Activated CD8-positive, alpha-beta T cell treated with anti-CD3 and anti-CD28 coated beads for 36 hours (primary cell): ENCODE measurements at regions of chr5 and their contacts with region 1.

Region 1: GRCh38 chr5:79020861-79021561 is 35.9 kb upstream of the ARSB start:
- DNase-seq: peak; percentile 66
- ATAC-seq: peak; percentile 51
- H3K4me3 Mint-ChIP-seq: no peak overlapping the region
- H3K27ac Mint-ChIP-seq: no peak overlapping the region
- H3K4me1 Mint-ChIP-seq: peaks cover 5% of the 10 kb centered on the region
- H3K27me3 Mint-ChIP-seq: peaks cover 41% of the 10 kb centered on the region
- CTCF ChIP-seq: peak; percentile 68

Region 2: DNA sequence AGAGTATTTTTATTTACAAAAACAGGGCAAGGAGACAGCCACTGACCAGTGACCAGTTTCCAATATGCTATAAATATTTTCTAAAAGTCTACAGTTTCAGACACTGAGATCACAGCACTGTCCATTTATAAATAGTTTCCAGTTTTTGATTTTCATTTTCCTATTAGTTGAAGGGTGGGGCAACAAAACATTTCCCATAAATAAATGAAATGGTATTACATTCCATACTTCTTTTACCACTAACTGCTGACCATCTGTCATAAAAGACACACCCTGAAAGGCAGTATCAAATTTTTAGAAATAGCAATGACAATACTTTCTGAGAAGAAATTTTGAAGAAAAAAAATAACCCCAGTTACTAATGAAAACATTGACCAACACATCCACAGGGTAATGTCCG is 162.6 kb before region 1 on chr5:
- CTCF ChIA-PET with region 1: no interaction called
- POLR2A ChIA-PET with region 1: no interaction called
- intact Hi-C with region 1: no loop called
- DNase-seq: no peak
- ATAC-seq: no peak
- H3K4me3 Mint-ChIP-seq: no peak overlapping the region
- H3K27ac Mint-ChIP-seq: no peak overlapping the region
- H3K4me1 Mint-ChIP-seq: no peaks in the 10 kb centered on the region
- H3K27me3 Mint-ChIP-seq: no peaks in the 10 kb centered on the region
- CTCF ChIP-seq: no peak

Region 3: GRCh38 chr5:78899922-78900362 is 121.1 kb before region 1 on chr5:
- CTCF ChIA-PET with region 1: interaction called, 11 read pairs
- POLR2A ChIA-PET with region 1: no interaction called
- intact Hi-C with region 1: no loop called
- DNase-seq: peak; percentile 43
- ATAC-seq: no peak
- H3K4me3 Mint-ChIP-seq: no peak overlapping the region
- H3K27ac Mint-ChIP-seq: no peak overlapping the region
- H3K4me1 Mint-ChIP-seq: no peaks in the 10 kb centered on the region
- H3K27me3 Mint-ChIP-seq: no peaks in the 10 kb centered on the region
- CTCF ChIP-seq: peak; percentile 33

Region 4: GRCh38 chr5:78993165-78993564 is 27.8 kb before region 1 on chr5:
- CTCF ChIA-PET with region 1: interaction called, 57 read pairs
- POLR2A ChIA-PET with region 1: interaction called, 3 read pairs
- intact Hi-C with region 1: no loop called
- DNase-seq: no peak
- ATAC-seq: peak; percentile 85
- H3K4me3 Mint-ChIP-seq: no peak overlapping the region
- H3K27ac Mint-ChIP-seq: no peak overlapping the region
- H3K4me1 Mint-ChIP-seq: peaks cover 18% of the 10 kb centered on the region
- H3K27me3 Mint-ChIP-seq: peaks cover 3% of the 10 kb centered on the region
- CTCF ChIP-seq: no peak

Region 5: GRCh38 chr5:79042188-79042587 is 21.2 kb after region 1 on chr5:
- CTCF ChIA-PET with region 1: interaction called, 53 read pairs
- POLR2A ChIA-PET with region 1: no interaction called
- intact Hi-C with region 1: no loop called
- DNase-seq: no peak
- ATAC-seq: no peak
- H3K4me3 Mint-ChIP-seq: no peak overlapping the region
- H3K27ac Mint-ChIP-seq: no peak overlapping the region
- H3K4me1 Mint-ChIP-seq: no peaks in the 10 kb centered on the region
- H3K27me3 Mint-ChIP-seq: no peaks in the 10 kb centered on the region
- CTCF ChIP-seq: no peak

Region 6: GRCh38 chr5:79074641-79075040 is 53.6 kb after region 1 on chr5:
- CTCF ChIA-PET with region 1: interaction called, 26 read pairs
- POLR2A ChIA-PET with region 1: no interaction called
- intact Hi-C with region 1: no loop called
- DNase-seq: peak; percentile 14
- ATAC-seq: peak; percentile 64
- H3K4me3 Mint-ChIP-seq: no peak overlapping the region
- H3K27ac Mint-ChIP-seq: no peak overlapping the region
- H3K4me1 Mint-ChIP-seq: peaks cover 11% of the 10 kb centered on the region
- H3K27me3 Mint-ChIP-seq: peaks cover 17% of the 10 kb centered on the region
- CTCF ChIP-seq: no peak

Region 7: GRCh38 chr5:79459626-79460025 is 438.6 kb after region 1 on chr5:
- CTCF ChIA-PET with region 1: interaction called, 17 read pairs
- POLR2A ChIA-PET with region 1: no interaction called
- intact Hi-C with region 1: loop called (anchors 10 kb)
- DNase-seq: no peak
- ATAC-seq: no peak
- H3K4me3 Mint-ChIP-seq: no peak overlapping the region
- H3K27ac Mint-ChIP-seq: no peak overlapping the region
- H3K4me1 Mint-ChIP-seq: peaks cover 8% of the 10 kb centered on the region
- H3K27me3 Mint-ChIP-seq: peaks cover 1% of the 10 kb centered on the region
- CTCF ChIP-seq: no peak